MCF 10A (cell line): ENCODE measurements at regions of chr3 and their contacts with region 1.

Region 1: DNA sequence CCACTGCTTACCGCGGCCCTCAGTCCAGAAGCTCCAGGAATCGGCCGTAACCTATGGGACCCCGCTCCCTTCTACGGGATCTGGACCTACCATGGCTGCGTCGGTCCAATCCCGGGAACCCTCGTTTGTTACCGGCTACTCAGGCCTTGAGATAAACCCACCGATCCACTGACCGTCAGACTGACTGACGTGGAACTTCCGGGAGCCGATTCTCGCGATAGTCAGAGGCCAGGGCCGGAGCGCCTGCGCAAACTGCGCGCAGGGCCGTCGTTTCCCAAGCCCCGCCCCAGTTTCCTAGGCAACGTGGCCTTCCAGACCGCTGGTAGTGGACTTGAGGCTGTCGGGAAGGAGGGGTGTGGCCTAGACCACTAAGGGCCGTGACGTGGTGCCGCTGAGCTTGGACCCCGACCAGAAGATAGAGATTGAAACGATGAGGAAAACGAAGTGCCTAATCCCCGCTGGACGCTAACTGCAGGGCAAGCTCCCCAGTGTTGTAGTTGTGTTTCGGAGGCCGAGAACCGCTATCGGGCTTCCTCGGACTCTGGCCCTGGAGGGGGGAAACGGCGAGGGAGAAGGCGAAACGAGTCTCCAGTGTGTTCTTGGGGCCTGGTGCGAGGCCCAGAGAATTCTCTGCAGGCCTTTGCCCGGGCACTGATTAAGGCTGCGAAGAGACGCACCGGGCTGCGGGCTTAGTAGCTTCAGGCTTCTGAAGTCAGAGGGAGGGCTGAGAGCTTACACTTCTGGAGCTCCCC is at the start of gene COPB2:
- DNase-seq: peak; percentile 99
- H3K4me3 Mint-ChIP-seq: peak within 1 kb of the TSS; percentile 78
- H3K27ac Mint-ChIP-seq: peak within 1 kb of the TSS; percentile 97
- H3K4me1 Mint-ChIP-seq: peaks cover 20% of the 10 kb centered on the region
- H3K27me3 Mint-ChIP-seq: no peaks in the 10 kb centered on the region
- CTCF ChIP-seq: no peak
- total RNA-seq, gene COPB2: 152 and 190 TPM in 2 replicates

Region 2: DNA sequence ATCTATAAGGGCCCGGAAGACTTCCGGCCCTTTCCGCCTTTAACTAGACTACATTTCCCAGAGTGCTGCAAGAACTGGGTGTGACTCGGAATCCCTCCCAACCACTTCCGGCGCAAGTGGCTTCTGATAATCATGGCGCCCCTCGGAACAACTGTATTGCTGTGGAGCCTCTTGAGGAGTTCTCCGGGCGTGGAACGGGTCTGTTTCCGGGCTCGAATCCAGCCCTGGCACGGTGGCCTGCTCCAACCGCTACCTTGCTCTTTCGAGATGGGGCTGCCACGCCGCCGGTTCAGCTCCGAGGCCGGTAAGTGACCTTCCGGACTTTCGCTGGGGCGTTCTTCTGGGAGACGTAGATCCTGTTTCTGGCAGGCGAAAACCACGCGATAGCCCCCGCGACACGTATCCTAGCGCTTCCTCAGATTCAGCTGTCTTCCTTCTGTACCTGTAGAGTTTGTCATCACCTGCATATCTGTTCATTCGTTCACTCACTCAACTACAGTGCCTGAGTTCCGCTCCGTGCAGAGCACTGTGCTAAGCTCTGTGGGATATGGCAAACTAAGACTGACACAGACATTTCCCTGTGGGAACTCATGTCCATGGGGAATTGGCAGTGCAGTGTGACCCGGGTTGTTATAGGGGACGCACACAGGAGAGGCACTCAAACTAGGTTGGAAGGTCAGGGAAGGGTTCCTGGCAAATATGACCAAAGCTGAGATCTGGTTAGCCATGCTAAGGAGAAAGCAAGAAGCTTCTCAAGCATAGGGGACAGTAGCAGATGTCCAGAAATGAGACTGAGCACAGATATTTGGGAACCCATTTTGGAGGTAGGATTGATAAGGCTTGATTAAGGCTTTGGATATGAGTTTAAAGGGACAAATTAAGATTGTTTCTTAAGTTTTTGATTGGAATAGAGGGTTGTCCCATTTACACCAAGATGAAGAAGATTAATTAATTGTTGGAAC is 45.5 kb before region 1 on chr3 and contains the start of gene MRPS22:
- CTCF ChIA-PET with region 1: interaction called, 3 read pairs
- POLR2A ChIA-PET with region 1: interaction called, 21 read pairs
- intact Hi-C with region 1: no loop called
- DNase-seq: peak; percentile 89
- H3K4me3 Mint-ChIP-seq: no peak within 1 kb of the TSS
- H3K27ac Mint-ChIP-seq: no peak within 1 kb of the TSS
- H3K4me1 Mint-ChIP-seq: peaks cover 6% of the 10 kb centered on the region
- H3K27me3 Mint-ChIP-seq: no peaks in the 10 kb centered on the region
- CTCF ChIP-seq: no peak
- total RNA-seq, gene MRPS22: 65.0 and 65.3 TPM in 2 replicates

Region 3: GRCh38 chr3:139353920-139354556 is 35.6 kb before region 1 on chr3:
- CTCF ChIA-PET with region 1: interaction called, 8 read pairs
- POLR2A ChIA-PET with region 1: interaction called, 10 read pairs
- intact Hi-C with region 1: no loop called
- DNase-seq: peak; percentile 64
- H3K4me3 Mint-ChIP-seq: no peak overlapping the region
- H3K27ac Mint-ChIP-seq: no peak overlapping the region
- H3K4me1 Mint-ChIP-seq: no peaks in the 10 kb centered on the region
- H3K27me3 Mint-ChIP-seq: no peaks in the 10 kb centered on the region
- CTCF ChIP-seq: peak; percentile 73

Region 4: DNA sequence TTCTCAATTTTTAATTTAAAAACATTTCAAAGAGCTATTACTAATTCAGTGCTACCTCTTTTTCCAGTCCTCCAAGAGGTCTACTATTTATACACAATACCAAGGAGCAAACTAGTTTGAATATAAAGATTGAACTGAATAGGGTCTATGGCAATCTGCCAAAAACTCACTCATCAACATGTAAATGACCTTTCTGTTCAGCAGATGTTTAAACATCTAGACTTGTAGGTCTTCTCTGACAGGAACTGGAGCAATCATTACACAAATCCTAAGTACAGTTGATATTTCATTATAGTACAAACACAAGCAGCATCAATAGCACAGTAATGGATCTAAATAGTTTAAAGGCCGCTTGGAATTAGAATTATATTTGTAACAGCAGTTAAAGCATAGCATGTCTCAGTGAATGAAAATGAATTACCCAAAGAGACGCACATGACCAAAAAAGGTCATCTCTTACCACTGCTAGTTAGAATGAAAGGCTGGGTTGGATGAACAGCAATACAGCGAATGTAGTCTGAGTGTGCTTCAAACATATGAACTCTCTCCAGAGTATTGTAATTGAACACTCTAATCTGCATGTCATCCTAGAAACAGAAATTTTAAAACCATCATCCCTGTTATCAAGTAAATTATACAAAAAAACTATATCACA is 10.9 kb before region 1 on chr3:
- CTCF ChIA-PET with region 1: interaction called, 4 read pairs
- POLR2A ChIA-PET with region 1: interaction called, 35 read pairs
- intact Hi-C with region 1: no loop called
- DNase-seq: no peak
- H3K4me3 Mint-ChIP-seq: no peak overlapping the region
- H3K27ac Mint-ChIP-seq: no peak overlapping the region
- H3K4me1 Mint-ChIP-seq: peaks cover 7% of the 10 kb centered on the region
- H3K27me3 Mint-ChIP-seq: no peaks in the 10 kb centered on the region
- CTCF ChIP-seq: no peak

Region 5: GRCh38 chr3:139434764-139435307 is 45.2 kb after region 1 on chr3:
- CTCF ChIA-PET with region 1: no interaction called
- POLR2A ChIA-PET with region 1: interaction called, 10 read pairs
- intact Hi-C with region 1: no loop called
- DNase-seq: peak; percentile 84
- H3K4me3 Mint-ChIP-seq: peak overlapping the region; percentile 35
- H3K27ac Mint-ChIP-seq: peak overlapping the region; percentile 96
- H3K4me1 Mint-ChIP-seq: peaks cover 19% of the 10 kb centered on the region
- H3K27me3 Mint-ChIP-seq: no peaks in the 10 kb centered on the region
- CTCF ChIP-seq: no peak